Heart right ventricle (tissue), 16 donors: ENCODE measurements at regions of chr14 and their contacts with region 1.

Region 1: DNA sequence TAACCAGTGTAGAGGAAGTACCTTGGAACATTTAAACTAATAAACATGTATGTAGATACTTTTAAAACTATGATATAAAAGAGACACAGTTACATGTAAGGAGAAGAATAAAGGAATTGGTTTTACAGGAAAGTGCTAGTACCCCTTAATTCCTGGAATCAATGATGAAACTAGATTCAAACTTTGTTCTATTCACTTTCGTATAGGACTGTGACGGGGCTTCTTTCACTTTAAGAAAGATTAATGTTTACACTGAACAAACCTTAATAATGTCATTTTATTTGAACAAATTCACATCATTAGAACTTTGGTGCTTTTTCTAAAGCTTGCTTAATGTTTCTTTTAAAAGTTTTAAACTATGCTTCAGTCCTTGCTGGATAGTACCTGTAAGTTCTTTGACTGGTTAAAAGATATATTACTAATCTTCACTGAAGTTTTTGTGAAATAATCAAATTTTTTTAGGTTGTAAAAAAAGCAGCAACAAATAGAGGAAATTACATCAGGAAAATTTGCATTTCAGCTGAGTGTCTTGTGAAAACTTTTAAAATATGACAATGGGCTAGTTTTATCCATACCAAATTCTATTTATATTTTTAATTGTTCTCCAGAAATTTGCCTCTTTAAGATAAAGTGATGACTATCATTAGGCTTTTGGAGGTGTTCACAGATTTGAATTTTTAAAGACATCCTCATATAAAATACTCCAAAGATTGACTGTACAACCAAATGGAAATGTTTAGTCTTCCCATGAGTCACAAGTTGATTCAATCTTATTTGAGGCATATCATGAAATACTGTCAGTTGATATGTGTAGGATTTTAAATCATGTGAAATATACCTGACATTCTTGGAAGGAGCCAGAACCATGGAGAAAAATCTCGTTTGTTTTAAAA is 36.2 kb downstream of the PAPOLA start:
- DNase-seq: no peak
- ATAC-seq: no peak
- H3K4me3 ChIP-seq: no peak overlapping the region
- H3K27ac ChIP-seq: no peak overlapping the region
- H3K4me1 ChIP-seq: no peaks in the 10 kb centered on the region
- H3K27me3 ChIP-seq: no peaks in the 10 kb centered on the region
- CTCF ChIP-seq: no peak

Region 2: DNA sequence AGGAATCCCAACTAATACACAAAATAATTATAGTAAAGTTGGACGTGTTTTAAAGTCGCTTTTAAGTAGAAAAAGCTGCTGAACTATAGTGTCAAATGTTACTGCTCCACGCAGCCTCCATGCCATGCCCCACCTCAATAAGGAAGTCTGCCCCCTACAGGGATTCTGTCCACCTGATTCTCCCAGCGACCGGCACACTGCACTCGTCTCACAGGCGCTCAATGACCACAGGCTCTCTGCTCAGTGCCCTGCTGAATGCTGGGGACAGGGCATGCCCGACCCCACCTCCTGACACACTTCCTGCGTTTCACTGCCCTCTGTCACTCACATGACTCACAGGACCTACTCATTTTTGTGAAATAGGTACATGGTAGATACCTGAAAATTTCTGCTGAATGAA is 233.4 kb before region 1 on chr14:
- intact Hi-C with region 1: loop called in 1 of 10 experiments (anchors 10 kb)
- DNase-seq: no peak
- ATAC-seq: no peak
- H3K4me3 ChIP-seq: no peak overlapping the region
- H3K27ac ChIP-seq: no peak overlapping the region
- H3K4me1 ChIP-seq: no peaks in the 10 kb centered on the region
- H3K27me3 ChIP-seq: no peaks in the 10 kb centered on the region
- CTCF ChIP-seq: peak in 1 of 9 donors; percentile 15